Activated CD4-positive, alpha-beta memory T cell treated with anti-CD3 and anti-CD28 coated beads for 36 hours (primary cell): ENCODE measurements at regions of chr6 and their contacts with region 1.

Region 1: GRCh38 chr6:134436281-134436815 is 118.4 kb upstream of the SGK1 start:
- DNase-seq: peak; percentile 89
- H3K4me3 Mint-ChIP-seq: peak overlapping the region; percentile 58
- H3K27ac Mint-ChIP-seq: peak overlapping the region; percentile 87
- H3K4me1 Mint-ChIP-seq: peaks cover 38% of the 10 kb centered on the region
- H3K27me3 Mint-ChIP-seq: no peaks in the 10 kb centered on the region

Region 2: DNA sequence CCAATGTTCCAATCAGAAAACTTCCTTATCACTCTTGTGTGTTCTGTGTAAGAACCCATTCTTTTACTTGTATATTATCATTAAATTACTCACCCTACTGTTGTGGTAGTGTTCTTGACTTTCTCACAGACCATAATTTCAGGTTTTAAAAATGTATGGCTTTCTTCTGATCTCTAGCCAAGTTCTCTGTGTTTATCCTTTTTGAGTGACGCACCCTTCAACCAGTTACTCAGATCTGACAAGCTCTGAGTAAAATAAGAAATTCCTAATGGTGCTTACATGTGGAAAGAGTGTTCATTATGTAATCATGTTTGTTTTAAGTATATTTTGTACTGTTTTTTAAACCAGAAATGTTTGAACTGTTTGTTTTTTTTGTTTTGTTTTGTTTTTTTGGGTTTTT is 472.3 kb before region 1 on chr6:
- CTCF ChIA-PET with region 1: no interaction called
- POLR2A ChIA-PET with region 1: no interaction called
- intact Hi-C with region 1: loop called (anchors 5 kb)
- DNase-seq: no peak
- H3K4me3 Mint-ChIP-seq: no peak overlapping the region
- H3K27ac Mint-ChIP-seq: peak overlapping the region; percentile 5
- H3K4me1 Mint-ChIP-seq: peaks cover 62% of the 10 kb centered on the region
- H3K27me3 Mint-ChIP-seq: no peaks in the 10 kb centered on the region

Region 3: GRCh38 chr6:134247231-134247833 is 189.0 kb before region 1 on chr6:
- CTCF ChIA-PET with region 1: no interaction called
- POLR2A ChIA-PET with region 1: no interaction called
- intact Hi-C with region 1: loop called (anchors 1 kb)
- DNase-seq: peak; percentile 86
- H3K4me3 Mint-ChIP-seq: peak overlapping the region; percentile 20
- H3K27ac Mint-ChIP-seq: peak overlapping the region; percentile 86
- H3K4me1 Mint-ChIP-seq: peaks cover 51% of the 10 kb centered on the region
- H3K27me3 Mint-ChIP-seq: no peaks in the 10 kb centered on the region

Region 4: DNA sequence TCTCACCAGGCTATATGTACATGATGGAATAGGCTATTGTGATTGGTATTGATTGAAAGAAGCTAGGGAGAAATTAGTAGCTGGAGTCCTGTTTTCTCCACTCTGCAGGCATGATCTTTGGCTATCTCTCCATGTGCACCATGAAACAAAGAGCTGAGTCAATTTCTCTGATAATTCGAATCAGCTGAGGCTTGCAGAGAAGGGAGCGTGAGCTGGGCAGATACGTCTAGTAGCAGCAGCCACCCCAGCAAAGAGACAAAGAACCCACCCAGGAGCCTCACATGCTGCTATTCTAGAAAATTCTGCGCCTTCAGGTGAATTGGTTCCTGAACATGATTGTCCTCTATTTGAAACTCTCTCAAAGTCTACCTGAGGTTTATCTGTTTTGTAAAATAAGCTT is 111.6 kb before region 1 on chr6:
- CTCF ChIA-PET with region 1: no interaction called
- POLR2A ChIA-PET with region 1: no interaction called
- intact Hi-C with region 1: no loop called
- DNase-seq: no peak
- H3K4me3 Mint-ChIP-seq: no peak overlapping the region
- H3K27ac Mint-ChIP-seq: no peak overlapping the region
- H3K4me1 Mint-ChIP-seq: peaks cover 6% of the 10 kb centered on the region
- H3K27me3 Mint-ChIP-seq: no peaks in the 10 kb centered on the region

Region 5: GRCh38 chr6:134352786-134353480 is 83.4 kb before region 1 on chr6:
- CTCF ChIA-PET with region 1: no interaction called
- POLR2A ChIA-PET with region 1: no interaction called
- intact Hi-C with region 1: loop called (anchors 2 kb)
- DNase-seq: peak; percentile 51
- H3K4me3 Mint-ChIP-seq: no peak overlapping the region
- H3K27ac Mint-ChIP-seq: no peak overlapping the region
- H3K4me1 Mint-ChIP-seq: peaks cover 28% of the 10 kb centered on the region
- H3K27me3 Mint-ChIP-seq: no peaks in the 10 kb centered on the region

Region 6: DNA sequence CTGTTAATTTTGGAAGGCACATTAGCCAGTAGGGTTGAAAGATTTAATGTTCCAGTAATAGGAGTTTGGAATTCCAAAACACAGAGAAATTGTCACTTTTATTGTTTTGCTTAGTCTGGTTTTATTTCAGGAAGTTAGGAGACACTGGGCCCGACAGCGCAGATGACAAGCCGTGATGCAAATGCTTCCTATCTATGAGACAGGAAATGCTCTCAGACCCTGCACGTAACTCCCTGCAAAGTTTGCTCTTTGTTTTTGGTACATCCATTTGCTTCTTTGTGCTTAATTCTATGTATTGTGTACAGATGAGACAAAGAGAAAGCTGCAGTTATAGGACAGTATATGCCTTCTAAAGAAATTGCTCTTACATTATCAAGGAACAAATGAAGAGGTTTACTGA is 83.1 kb after region 1 on chr6:
- CTCF ChIA-PET with region 1: no interaction called
- POLR2A ChIA-PET with region 1: no interaction called
- intact Hi-C with region 1: loop called (anchors 1 kb)
- DNase-seq: peak; percentile 58
- H3K4me3 Mint-ChIP-seq: no peak overlapping the region
- H3K27ac Mint-ChIP-seq: peak overlapping the region; percentile 64
- H3K4me1 Mint-ChIP-seq: peaks cover 28% of the 10 kb centered on the region
- H3K27me3 Mint-ChIP-seq: no peaks in the 10 kb centered on the region

Region 7: DNA sequence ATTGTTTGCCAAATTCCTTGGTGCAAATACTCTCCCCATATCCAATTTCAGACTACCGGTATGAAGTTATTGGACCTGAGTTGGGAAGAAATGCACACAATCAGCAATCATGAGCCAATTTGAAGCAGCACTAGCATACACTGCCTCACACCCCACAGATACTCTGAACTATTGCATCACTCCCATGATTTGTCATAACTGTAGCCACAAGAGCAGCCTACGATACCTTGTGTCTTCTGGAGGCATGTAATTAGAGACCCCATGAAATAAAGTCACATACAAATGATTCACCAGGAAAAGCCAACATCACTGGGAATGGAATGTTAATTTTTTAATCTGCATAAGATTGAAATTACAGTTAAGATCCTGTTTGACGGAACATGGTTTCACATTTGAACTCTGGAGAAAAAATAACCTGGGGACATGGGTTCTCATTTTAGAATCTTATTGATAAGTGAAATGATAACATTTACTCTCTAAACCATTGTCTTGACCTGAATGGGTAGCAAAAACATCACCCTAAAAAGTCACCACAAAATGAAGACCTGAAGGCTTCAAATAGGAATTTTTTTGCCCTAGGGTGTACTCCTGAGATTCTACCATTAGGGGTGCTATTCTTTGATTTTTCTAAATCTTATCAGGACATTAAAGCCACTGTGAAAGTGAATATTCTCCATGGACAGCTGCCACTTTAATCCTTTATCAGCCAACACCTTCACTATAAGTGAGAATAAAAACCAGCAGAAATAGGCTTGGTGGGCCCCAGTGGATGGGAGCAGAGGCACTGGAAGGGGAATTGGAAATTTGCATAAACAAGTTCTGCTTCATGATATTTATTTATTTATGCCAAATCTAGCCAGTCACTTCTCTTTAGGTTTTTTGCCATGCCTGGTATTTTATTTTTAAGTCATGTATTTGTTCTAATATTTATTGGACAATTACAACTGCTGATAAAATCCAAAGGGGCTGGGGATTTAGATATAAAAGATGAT is 652.8 kb after region 1 on chr6:
- CTCF ChIA-PET with region 1: no interaction called
- POLR2A ChIA-PET with region 1: no interaction called
- intact Hi-C with region 1: loop called (anchors 5 kb)
- DNase-seq: peak; percentile 56
- H3K4me3 Mint-ChIP-seq: peak overlapping the region; percentile 34
- H3K27ac Mint-ChIP-seq: peak overlapping the region; percentile 75
- H3K4me1 Mint-ChIP-seq: peaks cover 83% of the 10 kb centered on the region
- H3K27me3 Mint-ChIP-seq: no peaks in the 10 kb centered on the region